ENCODE measurements at regions of chr6 and their contacts with region 1.

Region 1: DNA sequence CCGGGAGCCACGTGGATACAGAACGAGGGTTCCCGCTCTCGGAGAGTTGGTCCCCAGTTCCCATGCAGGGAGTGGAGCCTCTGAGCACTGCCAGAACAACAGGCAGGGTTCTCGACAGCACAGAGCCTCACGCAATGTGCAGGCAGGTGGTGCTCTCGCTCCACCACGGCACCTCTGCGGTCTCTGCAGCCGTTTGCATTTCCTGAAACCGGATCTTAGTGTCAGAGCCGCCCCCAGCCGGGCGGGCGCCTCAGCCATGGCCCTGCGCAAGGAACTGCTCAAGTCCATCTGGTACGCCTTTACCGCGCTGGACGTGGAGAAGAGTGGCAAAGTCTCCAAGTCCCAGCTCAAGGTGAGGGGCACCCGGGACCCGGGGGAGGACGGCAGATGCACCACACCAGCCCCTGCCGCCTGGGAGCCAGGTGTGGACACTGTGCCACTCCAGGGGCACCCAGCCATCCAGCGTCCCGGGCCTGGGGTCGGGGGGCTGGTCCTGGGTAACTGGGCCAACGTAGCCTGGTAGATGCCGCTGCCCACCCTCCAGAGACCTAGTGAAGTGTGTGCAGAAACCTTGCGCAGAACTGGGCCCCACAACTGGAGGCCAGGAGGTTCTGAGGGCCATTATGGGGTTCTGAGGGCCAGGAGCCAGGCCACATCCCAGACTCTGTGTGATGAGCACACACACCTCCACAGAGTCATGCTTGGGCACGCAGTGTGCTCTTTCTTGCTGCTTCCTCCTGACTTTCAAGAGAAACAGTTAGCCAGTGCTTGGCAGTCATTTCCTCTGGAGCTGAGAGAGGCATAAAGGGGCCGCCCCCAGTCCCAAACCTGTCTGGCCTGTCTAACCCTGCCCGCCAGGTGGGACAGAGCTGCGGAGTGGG is at the start of gene DEF6:
- DNase-seq: peak; percentile 72
- ATAC-seq: peak; percentile 92
- H3K4me3 ChIP-seq: peak within 1 kb of the TSS; percentile 89
- H3K27ac ChIP-seq: peak within 1 kb of the TSS; percentile 93
- H3K4me1 ChIP-seq: peaks cover 25% of the 10 kb centered on the region
- H3K27me3 ChIP-seq: no peaks in the 10 kb centered on the region
- CTCF ChIP-seq: peak; percentile 92 to 99 (median 97); a peak in 5 of 6 replicates
- EP300 ChIP-seq: peak in 1 of 2 experiments; percentile 45; a peak in 1 of 4 replicates
- POLR2A ChIP-seq: peak; percentile 82
- RAD21 ChIP-seq: peak; percentile 96
- polyA plus RNA-seq, gene DEF6: 3.3 to 5.1 TPM

Region 2: DNA sequence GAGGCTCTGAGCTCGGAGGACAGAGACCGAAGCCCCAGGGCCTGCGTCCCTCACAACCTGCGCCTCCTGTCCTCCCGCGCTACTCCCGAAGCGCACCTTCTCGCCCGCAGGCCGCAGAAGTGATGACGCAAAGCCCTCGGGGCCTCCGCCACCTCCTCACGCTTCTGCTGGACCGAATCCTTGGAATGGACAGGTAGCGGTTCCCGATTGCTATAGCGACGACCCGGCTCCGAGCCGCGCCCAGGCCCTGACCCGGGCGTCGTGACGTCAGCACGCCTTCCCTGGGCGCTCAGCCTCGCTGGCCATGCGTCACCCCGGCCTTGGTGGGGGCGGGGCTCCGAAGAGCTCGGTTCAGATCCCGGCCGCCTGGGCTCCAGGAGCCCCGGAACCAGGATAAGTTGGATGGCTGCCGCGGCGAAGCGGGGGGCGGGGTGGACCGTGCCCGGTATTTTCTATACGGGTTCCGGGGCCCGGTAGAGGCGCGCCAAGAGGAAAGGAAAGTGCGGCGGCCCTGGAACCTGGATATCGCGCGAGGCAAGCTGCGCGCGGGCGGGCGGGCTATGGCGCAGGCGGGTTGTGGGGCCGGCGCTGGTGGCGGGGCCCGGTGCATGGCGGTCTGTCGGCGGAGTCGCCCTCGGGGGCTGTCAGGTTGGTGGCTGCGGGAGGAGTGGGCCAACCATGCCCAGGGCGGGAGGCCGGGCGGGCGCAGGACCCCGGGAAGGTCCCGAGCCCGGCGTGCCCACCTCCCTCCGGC is 38.5 kb before region 1 on chr6 and contains the start of gene ZNF76:
- CTCF ChIA-PET with region 1: interaction called, 23 read pairs
- POLR2A ChIA-PET with region 1: interaction called, 3 read pairs
- RAD21 ChIA-PET with region 1: interaction called, 9 read pairs
- SMC1A ChIA-PET with region 1: interaction called, 5 read pairs
- in situ Hi-C with region 1: no loop called
- intact Hi-C with region 1: no loop called
- DNase-seq: peak; percentile 63
- ATAC-seq: peak; percentile 90
- H3K4me3 ChIP-seq: peak within 1 kb of the TSS; percentile 70
- H3K27ac ChIP-seq: peak within 1 kb of the TSS; percentile 85
- H3K4me1 ChIP-seq: no peaks in the 10 kb centered on the region; the same call in 1 of the 2 replicates
- H3K27me3 ChIP-seq: no peaks in the 10 kb centered on the region
- CTCF ChIP-seq: no peak
- EP300 ChIP-seq: peak in 1 of 2 experiments; percentile 50; a peak in 2 of 4 replicates
- POLR2A ChIP-seq: peak; percentile 89
- RAD21 ChIP-seq: no peak
- polyA plus RNA-seq, gene ZNF76: 2.8 to 3.1 TPM

Region 3: DNA sequence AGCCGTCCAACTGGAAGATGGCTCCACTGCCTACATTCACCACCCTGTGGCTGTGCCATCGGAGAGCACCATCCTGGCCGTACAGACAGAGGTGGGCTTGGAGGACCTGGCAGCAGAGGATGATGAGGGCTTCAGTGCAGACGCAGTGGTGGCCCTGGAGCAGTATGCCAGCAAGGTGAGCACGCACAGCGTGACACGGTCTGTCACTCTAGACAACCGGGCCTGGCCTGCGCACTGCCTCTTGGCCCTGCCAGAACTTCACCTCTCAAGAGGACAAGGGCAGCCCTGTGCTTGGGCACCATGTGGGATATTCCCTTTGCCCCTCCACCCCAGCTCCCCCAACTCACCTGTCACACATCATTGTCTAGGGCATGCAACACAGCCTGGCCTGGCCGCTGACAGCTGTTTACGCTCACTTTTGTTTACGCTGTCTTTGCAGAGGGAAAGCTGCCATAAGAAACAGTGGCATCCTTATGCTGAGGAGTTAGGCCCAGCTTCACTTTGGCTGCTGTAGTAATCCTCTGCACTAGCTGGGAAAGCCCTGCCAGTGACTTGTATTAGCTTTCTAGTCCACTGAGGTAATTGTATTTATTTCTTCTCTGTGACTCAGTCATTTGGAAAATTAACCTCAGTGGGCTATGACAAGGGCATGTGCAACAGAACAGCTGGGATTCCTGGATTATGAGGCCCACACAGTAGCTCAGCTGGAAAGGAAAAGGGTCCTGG is 10.0 kb before region 1 on chr6:
- CTCF ChIA-PET with region 1: interaction called, 22 read pairs
- POLR2A ChIA-PET with region 1: interaction called, 4 read pairs
- RAD21 ChIA-PET with region 1: interaction called, 5 read pairs
- SMC1A ChIA-PET with region 1: interaction called, 4 read pairs
- in situ Hi-C with region 1: no loop called
- intact Hi-C with region 1: no loop called
- DNase-seq: no peak
- ATAC-seq: no peak
- H3K4me3 ChIP-seq: no peak overlapping the region
- H3K27ac ChIP-seq: no peak overlapping the region
- H3K4me1 ChIP-seq: no peaks in the 10 kb centered on the region
- H3K27me3 ChIP-seq: no peaks in the 10 kb centered on the region
- CTCF ChIP-seq: no peak
- EP300 ChIP-seq: no peak
- POLR2A ChIP-seq: no peak
- RAD21 ChIP-seq: no peak

Region 4: GRCh38 chr6:35342258-35343091 is 44.6 kb after region 1 on chr6 and contains the start of gene PPARD:
- CTCF ChIA-PET with region 1: interaction called, 31 read pairs
- POLR2A ChIA-PET with region 1: interaction called, 4 read pairs
- RAD21 ChIA-PET with region 1: interaction called, 32 read pairs
- SMC1A ChIA-PET with region 1: interaction called, 23 read pairs
- in situ Hi-C with region 1: no loop called
- intact Hi-C with region 1: loop called (anchors 1 kb)
- DNase-seq: peak; percentile 71
- ATAC-seq: peak; percentile 97
- H3K4me3 ChIP-seq: peak within 1 kb of the TSS; percentile 84
- H3K27ac ChIP-seq: peak within 1 kb of the TSS; percentile 70
- H3K4me1 ChIP-seq: no peaks in the 10 kb centered on the region; the same call in 1 of the 2 replicates
- H3K27me3 ChIP-seq: no peaks in the 10 kb centered on the region
- CTCF ChIP-seq: peak; percentile 97 to 99 (median 97); a peak in 5 of 6 replicates
- EP300 ChIP-seq: no peak
- POLR2A ChIP-seq: 0 out of 2 replicates have a peak, but pooled peaks have one; percentile 41
- RAD21 ChIP-seq: peak; percentile 100
- polyA plus RNA-seq, gene PPARD: 0.05 to 0.38 TPM

Region 5: GRCh38 chr6:35468181-35468979 is 170.5 kb after region 1 on chr6 and contains the start of gene RPL10A:
- CTCF ChIA-PET with region 1: interaction called, 17 read pairs
- POLR2A ChIA-PET with region 1: interaction called, 4 read pairs
- RAD21 ChIA-PET with region 1: interaction called, 10 read pairs
- SMC1A ChIA-PET with region 1: interaction called, 8 read pairs
- in situ Hi-C with region 1: loop called (anchors 5 kb)
- intact Hi-C with region 1: loop called (anchors 1 kb)
- DNase-seq: peak; percentile 94
- ATAC-seq: peak; percentile 89
- H3K4me3 ChIP-seq: peak within 1 kb of the TSS; percentile 99
- H3K27ac ChIP-seq: peak within 1 kb of the TSS; percentile 87
- H3K4me1 ChIP-seq: no peaks in the 10 kb centered on the region
- H3K27me3 ChIP-seq: no peaks in the 10 kb centered on the region
- CTCF ChIP-seq: peak; percentile 98 to 100 (median 99); a peak in 5 of 6 replicates
- EP300 ChIP-seq: no peak
- POLR2A ChIP-seq: peak; percentile 100
- RAD21 ChIP-seq: peak; percentile 79
- polyA plus RNA-seq, gene RPL10A: 2,399 to 2,699 TPM